PC-3 (cell line): ENCODE measurements at regions of chr14 and their contacts with region 1.

Region 1: GRCh38 chr14:30610787-30611343 is 11.3 kb upstream of the SCFD1 start:
- DNase-seq: peak; percentile 91
- ATAC-seq: peak; percentile 86
- H3K4me3 ChIP-seq: peak overlapping the region; percentile 11; the same call in 1 of the 2 replicates
- H3K27ac ChIP-seq: peak overlapping the region; percentile 37
- H3K4me1 ChIP-seq: peaks cover 27% of the 10 kb centered on the region
- H3K27me3 ChIP-seq: no peaks in the 10 kb centered on the region
- CTCF ChIP-seq: peak; percentile 62

Region 2: GRCh38 chr14:29548948-29549370 is 1061.9 kb before region 1 on chr14:
- CTCF ChIA-PET with region 1: no interaction called
- POLR2A ChIA-PET with region 1: no interaction called
- intact Hi-C with region 1: loop called (anchors 5 kb)
- DNase-seq: peak; percentile 77
- ATAC-seq: peak; percentile 89
- H3K4me3 ChIP-seq: no peak overlapping the region
- H3K27ac ChIP-seq: no peak overlapping the region
- H3K4me1 ChIP-seq: no peaks in the 10 kb centered on the region
- H3K27me3 ChIP-seq: peaks cover 7% of the 10 kb centered on the region; the same call in 1 of the 2 replicates
- CTCF ChIP-seq: peak; percentile 71

Region 3: DNA sequence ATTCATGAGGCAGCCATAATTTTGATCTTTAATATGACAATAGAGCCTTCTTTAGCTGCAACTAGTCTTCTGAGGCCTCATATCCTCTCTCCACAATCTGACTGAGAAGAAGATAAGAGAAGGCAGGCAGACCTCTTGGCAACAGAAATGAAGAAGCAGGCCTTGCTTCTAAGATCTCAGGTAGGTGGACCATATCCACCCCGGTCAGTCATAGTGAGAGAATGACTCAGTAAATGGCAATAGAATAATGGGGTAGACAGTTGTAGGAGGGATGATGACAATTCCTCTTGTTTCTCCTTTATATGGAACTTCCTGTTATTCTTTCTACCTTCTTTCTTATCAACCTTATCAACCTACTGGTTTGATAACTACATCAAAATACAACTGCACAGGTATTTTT is 298.7 kb before region 1 on chr14:
- CTCF ChIA-PET with region 1: no interaction called
- POLR2A ChIA-PET with region 1: no interaction called
- intact Hi-C with region 1: no loop called
- DNase-seq: no peak
- ATAC-seq: no peak
- H3K4me3 ChIP-seq: no peak overlapping the region
- H3K27ac ChIP-seq: no peak overlapping the region
- H3K4me1 ChIP-seq: no peaks in the 10 kb centered on the region
- H3K27me3 ChIP-seq: peaks cover 70% of the 10 kb centered on the region
- CTCF ChIP-seq: no peak

Region 4: DNA sequence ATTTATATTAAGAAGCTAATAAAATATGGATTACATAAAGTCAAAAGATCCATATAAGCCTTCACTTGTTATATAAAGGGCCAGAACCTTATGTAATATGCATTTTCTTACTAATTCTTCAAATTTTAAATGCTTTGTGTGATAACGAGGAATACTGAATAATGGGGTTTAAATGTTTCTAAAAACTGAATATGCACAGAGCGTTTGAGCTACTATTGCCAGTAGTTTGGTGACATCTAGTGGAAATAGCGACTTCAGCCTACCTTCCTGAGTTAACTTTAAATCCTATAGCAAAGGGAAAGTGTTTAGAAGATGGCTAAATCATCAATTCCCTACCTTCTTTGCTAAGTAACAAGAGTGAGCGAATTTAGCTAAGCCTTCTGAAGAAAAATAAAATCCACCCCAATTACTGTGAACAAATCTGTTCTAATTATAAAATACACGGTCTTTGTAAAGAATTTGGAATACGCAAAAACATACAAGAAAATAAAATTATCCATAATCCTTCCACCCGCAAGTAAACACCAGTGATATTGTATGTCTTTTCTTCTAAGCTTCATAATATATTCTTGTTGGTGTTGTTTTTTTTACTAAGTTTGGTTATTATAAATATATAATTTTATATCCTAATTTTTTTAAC is 167.4 kb before region 1 on chr14:
- CTCF ChIA-PET with region 1: no interaction called
- POLR2A ChIA-PET with region 1: no interaction called
- intact Hi-C with region 1: loop called (anchors 2 kb)
- DNase-seq: peak; percentile 73
- ATAC-seq: peak; percentile 67
- H3K4me3 ChIP-seq: no peak overlapping the region
- H3K27ac ChIP-seq: no peak overlapping the region
- H3K4me1 ChIP-seq: no peaks in the 10 kb centered on the region
- H3K27me3 ChIP-seq: peaks cover 44% of the 10 kb centered on the region
- CTCF ChIP-seq: peak; percentile 82

Region 5: GRCh38 chr14:30558675-30559555 is 52.0 kb before region 1 on chr14 and contains the start of gene G2E3:
- CTCF ChIA-PET with region 1: no interaction called
- POLR2A ChIA-PET with region 1: no interaction called
- intact Hi-C with region 1: loop called (anchors 1 kb)
- DNase-seq: peak; percentile 93
- ATAC-seq: peak; percentile 95
- H3K4me3 ChIP-seq: peak within 1 kb of the TSS; percentile 96
- H3K27ac ChIP-seq: peak within 1 kb of the TSS; percentile 72
- H3K4me1 ChIP-seq: peaks cover 28% of the 10 kb centered on the region
- H3K27me3 ChIP-seq: no peaks in the 10 kb centered on the region
- CTCF ChIP-seq: no peak
- total RNA-seq, gene G2E3: 27.8 and 32.8 TPM in 2 replicates

Region 6: DNA sequence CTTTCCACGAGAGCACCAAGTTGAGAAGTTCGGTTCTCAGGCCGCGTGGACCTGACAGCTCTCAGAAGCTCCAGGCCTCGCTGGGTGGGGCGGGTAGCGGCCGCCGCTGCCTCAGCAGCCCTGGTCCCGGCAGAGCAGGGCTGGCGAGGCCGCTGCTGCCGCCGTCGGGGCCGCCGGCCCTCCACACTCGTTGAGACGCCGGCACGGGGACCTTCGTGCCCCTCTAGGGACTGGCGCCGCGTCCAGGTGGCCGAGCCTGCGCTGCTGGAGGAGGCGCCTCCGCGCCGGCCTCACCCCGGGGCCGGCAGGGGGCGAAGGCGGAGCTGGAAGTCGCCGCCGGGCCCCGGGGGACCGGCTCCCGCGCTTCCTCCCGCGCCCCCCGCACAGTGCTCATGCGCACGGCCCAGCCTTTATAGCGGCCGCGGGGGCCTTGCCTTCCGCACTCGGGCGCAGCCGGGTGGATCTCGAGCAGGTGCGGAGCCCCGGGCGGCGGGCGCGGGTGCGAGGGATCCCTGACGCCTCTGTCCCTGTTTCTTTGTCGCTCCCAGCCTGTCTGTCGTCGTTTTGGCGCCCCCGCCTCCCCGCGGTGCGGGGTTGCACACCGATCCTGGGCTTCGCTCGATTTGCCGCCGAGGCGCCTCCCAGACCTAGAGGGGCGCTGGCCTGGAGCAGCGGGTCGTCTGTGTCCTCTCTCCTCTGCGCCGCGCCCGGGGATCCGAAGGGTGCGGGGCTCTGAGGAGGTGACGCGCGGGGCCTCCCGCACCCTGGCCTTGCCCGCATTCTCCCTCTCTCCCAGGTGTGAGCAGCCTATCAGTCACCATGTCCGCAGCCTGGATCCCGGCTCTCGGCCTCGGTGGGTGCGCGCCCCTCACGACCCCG is 263.5 kb after region 1 on chr14 and contains the start of gene COCH:
- CTCF ChIA-PET with region 1: no interaction called
- POLR2A ChIA-PET with region 1: no interaction called
- intact Hi-C with region 1: no loop called
- DNase-seq: peak; percentile 45
- ATAC-seq: peak; percentile 84
- H3K4me3 ChIP-seq: peak within 1 kb of the TSS; percentile 66
- H3K27ac ChIP-seq: no peak within 1 kb of the TSS
- H3K4me1 ChIP-seq: no peaks in the 10 kb centered on the region
- H3K27me3 ChIP-seq: no peaks in the 10 kb centered on the region
- CTCF ChIP-seq: peak; percentile 49
- total RNA-seq, gene COCH: 2.5 and 4.2 TPM in 2 replicates

Region 7: DNA sequence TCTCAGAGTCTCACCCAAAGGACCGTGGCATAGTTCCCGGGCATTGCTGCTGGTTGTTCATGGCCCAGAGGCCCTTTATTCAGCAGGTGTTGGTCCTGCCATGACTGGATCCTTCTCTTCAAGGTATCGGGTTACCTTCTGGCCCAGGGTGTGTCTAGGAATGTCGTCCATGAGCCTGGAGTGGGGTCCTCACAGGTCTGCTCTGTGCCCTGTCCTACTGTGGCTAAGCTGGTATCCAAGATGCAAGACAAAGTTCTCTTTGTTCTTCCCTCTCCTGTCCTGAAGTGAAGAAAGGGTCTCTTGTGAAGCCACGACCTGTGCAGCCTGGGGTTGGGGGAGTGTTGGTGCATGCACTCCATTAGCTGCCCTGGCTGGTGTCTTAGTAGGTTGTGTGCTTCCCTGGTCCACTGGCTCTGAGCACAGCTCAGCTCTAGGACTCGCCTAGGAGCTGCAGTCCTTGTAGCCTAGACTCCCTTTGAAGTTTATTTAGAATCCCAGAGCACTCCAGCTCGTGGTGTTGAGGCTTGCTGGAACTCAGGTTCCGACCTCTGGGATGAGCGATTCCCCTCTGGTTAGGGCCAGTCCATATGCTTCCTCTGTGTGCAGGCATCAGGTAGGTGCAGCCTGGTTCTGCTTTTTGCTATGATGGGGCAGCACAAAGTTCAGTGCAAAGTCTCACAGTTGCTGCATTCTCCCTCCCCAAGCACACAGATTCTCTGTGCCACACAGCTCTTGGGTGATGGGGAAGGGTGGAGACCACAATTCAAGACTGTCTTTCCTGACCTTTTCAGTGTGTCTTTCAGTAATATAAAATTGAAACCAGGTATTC is 1067.8 kb after region 1 on chr14:
- CTCF ChIA-PET with region 1: no interaction called
- POLR2A ChIA-PET with region 1: interaction called, 10 read pairs
- intact Hi-C with region 1: no loop called
- DNase-seq: no peak
- ATAC-seq: no peak
- H3K4me3 ChIP-seq: no peak overlapping the region
- H3K27ac ChIP-seq: no peak overlapping the region
- H3K4me1 ChIP-seq: no peaks in the 10 kb centered on the region
- H3K27me3 ChIP-seq: no peaks in the 10 kb centered on the region
- CTCF ChIP-seq: no peak